ENCODE measurements at regions of chr14 and their contacts with region 1.

Region 1: GRCh38 chr14:56422703-56423213 is 156.8 kb upstream of the TMEM260 start:
- DNase-seq: peak; percentile 77
- H3K4me3 Mint-ChIP-seq: no peak overlapping the region
- H3K27ac Mint-ChIP-seq: no peak overlapping the region
- H3K4me1 Mint-ChIP-seq: no peaks in the 10 kb centered on the region
- H3K27me3 Mint-ChIP-seq: no peaks in the 10 kb centered on the region
- CTCF ChIP-seq: peak; percentile 58

Region 2: GRCh38 chr14:55438066-55438683 is 984.6 kb before region 1 on chr14:
- CTCF ChIA-PET with region 1: no interaction called
- POLR2A ChIA-PET with region 1: no interaction called
- intact Hi-C with region 1: loop called (anchors 2 kb)
- DNase-seq: peak; percentile 68
- H3K4me3 Mint-ChIP-seq: no peak overlapping the region
- H3K27ac Mint-ChIP-seq: no peak overlapping the region
- H3K4me1 Mint-ChIP-seq: no peaks in the 10 kb centered on the region
- H3K27me3 Mint-ChIP-seq: peaks cover 16% of the 10 kb centered on the region
- CTCF ChIP-seq: peak; percentile 63

Region 3: GRCh38 chr14:55707365-55707804 is 715.4 kb before region 1 on chr14:
- CTCF ChIA-PET with region 1: interaction called, 31 read pairs
- POLR2A ChIA-PET with region 1: no interaction called
- intact Hi-C with region 1: loop called (anchors 1 kb)
- DNase-seq: peak; percentile 50
- H3K4me3 Mint-ChIP-seq: no peak overlapping the region
- H3K27ac Mint-ChIP-seq: no peak overlapping the region
- H3K4me1 Mint-ChIP-seq: peaks cover 25% of the 10 kb centered on the region
- H3K27me3 Mint-ChIP-seq: no peaks in the 10 kb centered on the region
- CTCF ChIP-seq: peak; percentile 58

Region 4: DNA sequence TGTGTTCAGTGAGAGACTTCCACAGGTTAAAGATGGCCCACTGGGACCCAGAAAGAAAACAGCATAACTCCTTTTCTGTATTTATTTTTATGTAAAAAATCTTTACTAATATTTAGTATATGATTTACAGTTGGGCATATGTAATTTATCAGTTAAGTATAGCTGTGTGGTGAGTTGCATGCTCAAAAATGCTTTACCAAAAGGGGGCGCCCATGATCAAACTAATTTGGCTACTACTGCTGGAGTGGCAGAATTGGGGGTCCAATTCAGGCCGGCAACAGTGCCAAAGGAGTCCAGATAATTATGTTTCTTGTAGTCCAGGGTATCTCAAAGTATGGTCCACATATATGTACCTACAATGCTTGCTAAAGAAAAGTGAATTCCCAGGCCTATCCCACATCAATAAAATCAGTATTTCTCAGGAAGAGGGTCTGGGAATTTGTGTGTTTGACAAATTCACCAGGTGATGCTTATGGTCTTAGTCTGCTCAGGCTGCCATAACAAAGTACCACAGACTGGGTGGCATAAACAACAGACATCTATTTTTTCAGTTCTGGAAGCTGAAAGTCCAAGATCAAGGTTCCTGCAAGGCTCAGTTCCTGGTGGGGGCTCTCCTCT is 690.8 kb before region 1 on chr14:
- CTCF ChIA-PET with region 1: interaction called, 4 read pairs
- POLR2A ChIA-PET with region 1: no interaction called
- intact Hi-C with region 1: loop called (anchors 2 kb)
- DNase-seq: peak; percentile 54
- H3K4me3 Mint-ChIP-seq: no peak overlapping the region
- H3K27ac Mint-ChIP-seq: no peak overlapping the region
- H3K4me1 Mint-ChIP-seq: peaks cover 6% of the 10 kb centered on the region
- H3K27me3 Mint-ChIP-seq: no peaks in the 10 kb centered on the region
- CTCF ChIP-seq: peak; percentile 46

Region 5: DNA sequence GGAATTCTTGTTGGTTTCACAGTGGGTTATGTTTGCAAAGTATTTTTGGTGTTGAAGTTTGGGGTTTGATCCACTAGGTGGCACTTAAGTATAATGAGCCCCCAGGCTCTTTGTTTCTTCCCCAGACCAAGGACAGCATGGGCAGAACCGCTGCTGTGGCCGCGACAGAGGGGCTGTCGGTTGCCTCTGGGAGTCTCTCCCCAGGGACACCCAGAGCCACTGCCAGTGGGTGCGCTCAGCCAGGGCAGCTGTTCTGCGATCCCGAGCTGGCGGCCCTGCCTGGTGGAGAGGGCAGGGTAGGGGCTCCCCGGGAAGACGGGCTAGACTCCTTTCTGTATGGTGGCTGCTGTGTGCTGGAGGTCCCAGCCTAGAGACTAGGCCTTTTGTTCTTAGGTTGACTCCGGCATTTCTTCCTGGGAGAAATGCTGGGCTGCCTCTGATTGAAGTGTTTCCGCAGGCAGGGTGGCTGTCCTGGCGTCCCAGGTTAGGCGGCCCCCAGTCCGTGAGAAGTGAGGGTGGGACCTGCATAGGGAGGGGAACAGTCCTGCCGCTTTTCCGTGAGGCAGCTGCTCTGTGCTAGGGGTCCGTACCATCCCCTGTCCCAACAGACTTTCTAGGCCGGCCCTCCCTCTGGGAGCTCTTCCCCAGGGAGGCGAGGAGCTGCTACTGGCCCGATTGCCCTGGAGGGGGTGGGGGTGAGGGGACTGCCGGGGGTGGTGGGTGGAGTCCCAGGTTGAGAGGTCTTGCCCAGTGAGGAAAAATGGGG is 557.7 kb before region 1 on chr14:
- CTCF ChIA-PET with region 1: interaction called, 4 read pairs
- POLR2A ChIA-PET with region 1: no interaction called
- intact Hi-C with region 1: loop called (anchors 5 kb)
- DNase-seq: peak; percentile 36
- H3K4me3 Mint-ChIP-seq: no peak overlapping the region
- H3K27ac Mint-ChIP-seq: no peak overlapping the region
- H3K4me1 Mint-ChIP-seq: no peaks in the 10 kb centered on the region
- H3K27me3 Mint-ChIP-seq: no peaks in the 10 kb centered on the region
- CTCF ChIP-seq: no peak

Region 6: DNA sequence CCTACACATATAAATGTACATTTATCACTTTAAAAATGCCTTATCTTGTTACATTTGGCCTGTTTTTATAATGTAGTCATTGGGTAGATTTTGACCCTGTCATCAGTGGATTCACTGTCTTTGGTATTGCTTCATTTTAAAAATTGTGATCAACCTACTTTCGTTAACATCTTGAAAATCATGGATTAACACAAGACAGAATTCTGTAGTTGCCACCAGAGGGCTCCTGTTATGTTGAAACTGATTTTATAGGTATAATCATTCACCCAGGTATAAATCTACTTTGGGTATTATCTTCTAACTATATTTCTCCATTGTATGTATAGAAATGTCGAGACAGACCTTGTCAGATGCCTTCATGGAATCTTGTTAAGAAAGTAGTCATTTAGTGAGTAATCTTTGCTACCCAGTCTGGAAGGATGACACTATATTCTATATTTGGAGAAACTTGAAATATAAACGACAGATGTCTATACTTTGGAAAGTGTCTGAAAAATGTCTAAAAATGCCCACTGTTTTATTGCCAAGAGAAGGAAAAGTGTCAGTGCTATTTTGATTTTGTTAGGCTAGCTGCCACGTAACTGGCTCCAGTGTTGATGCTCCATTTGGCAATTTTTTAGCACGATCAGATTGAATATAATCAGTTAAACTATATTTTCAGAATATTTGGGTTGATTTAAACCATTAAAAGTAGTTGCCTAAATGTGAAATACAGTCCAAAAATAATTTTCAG is 175.1 kb before region 1 on chr14:
- CTCF ChIA-PET with region 1: interaction called, 6 read pairs
- POLR2A ChIA-PET with region 1: no interaction called
- intact Hi-C with region 1: loop called (anchors 1 kb)
- DNase-seq: peak; percentile 41
- H3K4me3 Mint-ChIP-seq: no peak overlapping the region
- H3K27ac Mint-ChIP-seq: no peak overlapping the region
- H3K4me1 Mint-ChIP-seq: peaks cover 5% of the 10 kb centered on the region
- H3K27me3 Mint-ChIP-seq: no peaks in the 10 kb centered on the region
- CTCF ChIP-seq: peak; percentile 28